Caco-2 (cell line): ENCODE measurements at regions of chr5 and their contacts with region 1.

Region 1: DNA sequence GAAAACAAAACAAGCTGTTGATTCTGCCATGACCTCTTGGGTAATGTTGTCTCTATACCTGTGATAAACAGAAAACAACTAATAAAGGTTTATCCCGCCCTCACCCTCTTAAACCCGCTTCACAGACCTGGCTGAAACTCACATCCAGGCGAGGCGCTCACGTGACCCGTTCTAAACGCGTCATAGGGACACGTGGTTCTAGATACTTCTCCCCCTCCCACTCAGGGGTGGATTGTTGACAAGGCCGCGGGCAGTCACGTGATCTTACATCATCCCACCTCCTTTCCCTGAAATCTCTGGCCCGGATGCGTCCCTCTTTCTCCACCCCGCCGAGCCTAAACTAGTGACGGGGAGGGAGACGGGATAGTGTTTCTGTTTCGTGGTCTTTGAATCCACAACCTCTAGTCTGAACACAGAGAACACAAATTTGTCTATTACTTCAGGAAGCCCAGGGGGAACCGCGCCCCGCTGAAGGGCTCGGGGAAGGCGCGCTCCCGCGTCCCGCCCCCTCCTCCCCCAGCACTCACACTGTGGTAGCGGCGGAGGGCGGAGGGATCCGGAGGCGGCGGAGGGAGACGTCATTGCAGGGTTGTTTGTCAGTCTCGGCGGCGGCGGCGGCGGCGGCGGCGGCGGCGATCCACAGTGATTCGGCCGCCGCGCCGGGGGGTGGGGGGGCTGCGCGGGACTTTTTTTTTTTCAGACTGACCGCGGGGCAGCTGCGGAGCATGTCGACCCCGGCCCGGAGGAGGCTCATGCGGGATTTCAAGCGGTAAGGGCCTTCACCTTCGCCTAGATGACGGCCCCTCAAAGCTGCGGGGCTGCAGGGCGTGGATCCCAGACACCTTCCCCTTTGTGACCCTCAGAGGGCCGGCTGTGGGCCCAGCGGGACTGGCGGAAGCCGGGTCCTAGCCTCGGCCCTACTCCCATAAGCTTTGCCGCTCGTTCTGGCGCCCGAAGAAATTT is at the start of gene UBE2B:
- DNase-seq: peak; percentile 97 to 99
- H3K4me3 ChIP-seq: peak within 1 kb of the TSS; percentile 98
- H3K4me3 Mint-ChIP-seq: peak within 1 kb of the TSS; percentile 97
- H3K27ac Mint-ChIP-seq: peak within 1 kb of the TSS; percentile 99
- H3K4me1 ChIP-seq: peaks cover 2% of the 10 kb centered on the region; the same call in 1 of the 2 replicates
- H3K4me1 Mint-ChIP-seq: peaks cover 20% of the 10 kb centered on the region
- H3K27me3 ChIP-seq: no peaks in the 10 kb centered on the region
- H3K27me3 Mint-ChIP-seq: no peaks in the 10 kb centered on the region
- CTCF ChIP-seq: no peak
- total RNA-seq, gene UBE2B: 76.1 and 78.9 TPM in 2 replicates

Region 2: DNA sequence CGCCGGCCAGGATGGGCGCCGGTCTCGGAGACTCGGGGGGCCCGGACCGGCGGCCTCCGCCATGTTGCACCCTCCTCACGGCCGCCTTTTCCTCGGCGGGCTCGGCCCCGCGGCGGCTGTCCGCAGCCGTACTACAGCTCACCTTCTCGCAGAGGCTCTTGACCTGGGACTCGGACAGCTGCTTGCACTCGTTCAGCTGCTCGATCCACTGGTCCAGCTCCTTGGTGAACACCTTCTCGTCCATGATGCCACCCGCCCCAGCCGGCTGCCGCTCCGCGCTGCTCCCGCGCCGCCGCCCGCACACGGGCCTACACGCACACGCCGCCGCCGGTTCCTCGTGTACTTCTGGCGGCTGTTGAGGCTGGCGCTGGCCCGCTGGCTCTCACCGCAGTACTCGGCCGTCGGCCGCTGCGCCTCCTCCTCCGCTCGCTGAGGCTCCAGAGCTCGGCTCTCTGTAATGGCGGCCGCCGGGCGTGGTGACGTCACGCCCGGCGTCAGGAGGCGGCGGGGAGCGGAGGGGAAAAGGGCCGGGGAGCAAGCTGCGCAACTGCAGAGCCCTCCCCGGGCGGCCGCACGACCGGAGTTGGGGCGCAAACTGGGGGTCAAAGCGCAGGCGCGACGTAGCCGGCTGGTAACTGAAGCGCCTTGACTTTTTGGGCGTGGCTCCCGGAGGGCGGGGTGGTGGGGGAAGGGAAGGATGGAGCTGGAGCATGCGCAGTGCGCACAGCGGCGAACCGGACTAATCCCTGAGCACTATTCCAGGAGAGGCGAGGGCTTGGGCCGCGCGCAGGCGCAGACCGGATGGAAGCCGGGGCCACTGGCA is 145.3 kb before region 1 on chr5 and contains the start of gene PPP2CA:
- CTCF ChIA-PET with region 1: no interaction called
- POLR2A ChIA-PET with region 1: interaction called, 8 read pairs
- intact Hi-C with region 1: loop called (anchors 5 kb)
- DNase-seq: peak; percentile 99 to 100
- H3K4me3 ChIP-seq: peak within 1 kb of the TSS; percentile 96
- H3K4me3 Mint-ChIP-seq: peak within 1 kb of the TSS; percentile 81
- H3K27ac Mint-ChIP-seq: peak within 1 kb of the TSS; percentile 99
- H3K4me1 ChIP-seq: peaks cover 21% of the 10 kb centered on the region
- H3K4me1 Mint-ChIP-seq: peaks cover 34% of the 10 kb centered on the region
- H3K27me3 ChIP-seq: no peaks in the 10 kb centered on the region
- H3K27me3 Mint-ChIP-seq: no peaks in the 10 kb centered on the region
- CTCF ChIP-seq: peak in 1 of 2 experiments; percentile 0
- total RNA-seq, gene PPP2CA: 202 and 224 TPM in 2 replicates

Region 3: DNA sequence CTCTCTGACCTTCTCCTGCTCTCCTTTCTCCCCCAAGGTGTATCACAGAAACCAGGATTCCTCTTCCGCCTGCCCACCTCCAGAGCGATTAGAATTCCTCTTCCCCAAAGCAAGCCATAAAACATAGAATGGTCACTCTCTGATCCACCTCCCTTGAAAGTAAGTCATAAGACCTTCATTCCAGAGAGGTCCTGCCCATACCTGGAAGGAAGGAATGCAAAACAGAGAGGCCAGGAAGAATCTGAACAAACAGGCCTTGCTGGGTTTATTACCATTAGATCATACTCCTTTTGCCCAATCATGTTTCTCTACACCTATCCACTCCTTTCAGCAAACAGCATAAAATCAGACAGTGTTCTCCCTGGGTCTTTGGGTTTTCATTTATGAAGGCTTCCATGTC is 25.2 kb before region 1 on chr5:
- CTCF ChIA-PET with region 1: no interaction called
- POLR2A ChIA-PET with region 1: interaction called, 21 read pairs
- intact Hi-C with region 1: loop called (anchors 1 kb)
- DNase-seq: peak; percentile 90
- H3K4me3 ChIP-seq: no peak overlapping the region
- H3K4me3 Mint-ChIP-seq: peak overlapping the region; percentile 25
- H3K27ac Mint-ChIP-seq: peak overlapping the region; percentile 79
- H3K4me1 ChIP-seq: peaks cover 38% of the 10 kb centered on the region
- H3K4me1 Mint-ChIP-seq: peaks cover 20% of the 10 kb centered on the region
- H3K27me3 ChIP-seq: no peaks in the 10 kb centered on the region
- H3K27me3 Mint-ChIP-seq: no peaks in the 10 kb centered on the region
- CTCF ChIP-seq: no peak

Region 4: GRCh38 chr5:134527146-134527960 is 156.2 kb after region 1 on chr5:
- CTCF ChIA-PET with region 1: no interaction called
- POLR2A ChIA-PET with region 1: interaction called, 11 read pairs
- intact Hi-C with region 1: loop called (anchors 5 kb)
- DNase-seq: peak; percentile 89 to 94
- H3K4me3 ChIP-seq: peak overlapping the region; percentile 92
- H3K4me3 Mint-ChIP-seq: peak overlapping the region; percentile 96
- H3K27ac Mint-ChIP-seq: peak overlapping the region; percentile 92
- H3K4me1 ChIP-seq: peaks cover 31% of the 10 kb centered on the region
- H3K4me1 Mint-ChIP-seq: peaks cover 8% of the 10 kb centered on the region
- H3K27me3 ChIP-seq: no peaks in the 10 kb centered on the region
- H3K27me3 Mint-ChIP-seq: no peaks in the 10 kb centered on the region
- CTCF ChIP-seq: peak; percentile 76 to 79